ENCODE measurements at regions of chr11 and their contacts with region 1.

Region 1: DNA sequence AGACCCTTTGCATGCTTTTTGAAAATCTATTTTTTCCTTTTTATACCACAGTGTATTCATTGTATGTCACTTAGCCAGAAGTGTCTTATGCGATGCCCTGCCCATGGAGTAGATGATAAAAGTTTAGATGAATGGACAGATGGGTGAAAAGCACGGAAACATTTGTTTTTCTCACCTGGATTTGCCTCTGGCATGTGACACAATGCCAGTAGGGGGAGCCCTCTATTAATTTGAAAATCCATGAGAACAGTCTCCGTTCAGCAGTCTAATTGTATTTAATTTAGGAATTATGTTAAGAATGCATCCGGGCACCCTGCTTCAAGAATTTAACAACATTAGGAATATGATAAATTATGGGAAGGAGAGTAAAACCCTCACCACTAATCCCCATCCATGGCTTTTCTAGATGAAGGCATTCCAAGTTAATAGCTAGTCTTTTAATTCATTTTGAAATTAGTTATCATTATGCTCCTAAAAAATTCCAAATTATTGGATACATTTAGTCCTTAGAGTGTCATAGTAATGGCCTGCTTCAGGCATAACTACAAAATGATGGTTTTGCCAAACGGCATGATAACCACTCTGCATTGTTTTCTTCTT is 55.3 kb upstream of the ALKBH3 start:
- DNase-seq: peak in 2 of 9 experiments; percentile 18 to 34
- ATAC-seq: no peak
- H3K4me3 ChIP-seq: no peak overlapping the region
- H3K4me3 Mint-ChIP-seq: no peak overlapping the region
- H3K27ac ChIP-seq: no peak overlapping the region
- H3K27ac Mint-ChIP-seq: no peak overlapping the region
- H3K4me1 ChIP-seq: no peaks in the 10 kb centered on the region
- H3K4me1 Mint-ChIP-seq: no peaks in the 10 kb centered on the region
- H3K27me3 ChIP-seq: no peaks in the 10 kb centered on the region
- H3K27me3 Mint-ChIP-seq: no peaks in the 10 kb centered on the region
- CTCF ChIP-seq: peak; percentile 44

Region 2: GRCh38 chr11:43674560-43674959 is 150.8 kb before region 1 on chr11:
- CTCF ChIA-PET with region 1: no interaction called
- POLR2A ChIA-PET with region 1: no interaction called
- intact Hi-C with region 1: no loop called
- DNase-seq: no peak
- ATAC-seq: no peak
- H3K4me3 ChIP-seq: no peak overlapping the region
- H3K4me3 Mint-ChIP-seq: no peak overlapping the region
- H3K27ac ChIP-seq: no peak overlapping the region
- H3K27ac Mint-ChIP-seq: no peak overlapping the region
- H3K4me1 ChIP-seq: peaks cover 2% of the 10 kb centered on the region
- H3K4me1 Mint-ChIP-seq: peaks cover 2% of the 10 kb centered on the region
- H3K27me3 ChIP-seq: no peaks in the 10 kb centered on the region
- H3K27me3 Mint-ChIP-seq: peaks cover 9% of the 10 kb centered on the region
- CTCF ChIP-seq: no peak

Region 3: GRCh38 chr11:43944761-43945311 is 119.5 kb after region 1 on chr11:
- CTCF ChIA-PET with region 1: interaction called, 3 read pairs
- POLR2A ChIA-PET with region 1: no interaction called
- intact Hi-C with region 1: loop called in 1 of 2 experiments (anchors 10 kb)
- DNase-seq: peak; percentile 33 to 68 (median 49)
- ATAC-seq: peak; percentile 40
- H3K4me3 ChIP-seq: no peak overlapping the region
- H3K4me3 Mint-ChIP-seq: peak overlapping the region; percentile 63
- H3K27ac ChIP-seq: no peak overlapping the region
- H3K27ac Mint-ChIP-seq: no peak overlapping the region
- H3K4me1 ChIP-seq: peaks cover 11% of the 10 kb centered on the region
- H3K4me1 Mint-ChIP-seq: peaks cover 16% of the 10 kb centered on the region
- H3K27me3 ChIP-seq: peaks cover 18 to 23% of the 10 kb centered on the region in 2 experiments
- H3K27me3 Mint-ChIP-seq: peaks cover 52% of the 10 kb centered on the region
- CTCF ChIP-seq: peak; percentile 23

Measured in CD8-positive, alpha-beta T cell (primary cell).